ENCODE measurements at regions of chr11 and their contacts with region 1.

Region 1: DNA sequence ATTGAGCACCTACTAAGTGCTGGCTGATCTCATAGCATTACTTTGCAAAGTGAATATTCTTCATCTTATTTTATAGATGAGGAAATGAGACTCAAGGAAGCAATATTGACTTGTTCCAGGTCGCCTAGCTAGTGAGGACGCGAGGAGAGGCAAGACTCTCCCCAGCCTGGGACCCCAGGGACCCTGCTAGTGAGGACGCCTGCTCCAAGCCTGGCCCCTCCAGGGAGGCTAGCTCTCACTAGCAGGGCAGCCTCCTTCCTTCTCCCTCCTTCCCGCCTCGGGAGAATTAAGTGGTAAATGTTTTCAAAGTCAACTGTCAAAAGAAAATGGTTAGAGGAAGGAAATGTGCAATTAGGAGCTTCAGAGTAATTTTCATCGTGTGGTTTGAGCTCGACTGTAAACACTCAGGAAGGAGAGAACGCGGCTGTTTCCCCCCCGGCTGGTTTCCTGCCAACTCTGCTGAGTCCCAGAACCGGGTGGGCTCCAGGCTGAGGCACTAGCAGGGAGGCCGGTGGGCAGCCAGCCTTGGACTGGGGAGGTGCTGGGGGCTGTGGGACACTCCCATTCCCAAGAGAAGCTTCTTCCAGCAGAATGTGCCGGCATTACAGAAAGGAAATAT is 17.9 kb downstream of the MYEOV start:
- DNase-seq: peak in 6 of 10 donors; percentile 20 to 59 (median 52)
- ATAC-seq: peak; percentile 87 to 90
- H3K4me3 Mint-ChIP-seq: peak overlapping the region; percentile 47 to 79 (median 71)
- H3K27ac Mint-ChIP-seq: peak overlapping the region in 9 of 10 donors; percentile 40 to 90 (median 86)
- H3K4me1 Mint-ChIP-seq: peaks cover 28 to 40% (median 34%) of the 10 kb centered on the region in 4 donors
- H3K27me3 Mint-ChIP-seq: peaks cover 0 to 4% (median 0%) of the 10 kb centered on the region in 5 donors

Region 2: DNA sequence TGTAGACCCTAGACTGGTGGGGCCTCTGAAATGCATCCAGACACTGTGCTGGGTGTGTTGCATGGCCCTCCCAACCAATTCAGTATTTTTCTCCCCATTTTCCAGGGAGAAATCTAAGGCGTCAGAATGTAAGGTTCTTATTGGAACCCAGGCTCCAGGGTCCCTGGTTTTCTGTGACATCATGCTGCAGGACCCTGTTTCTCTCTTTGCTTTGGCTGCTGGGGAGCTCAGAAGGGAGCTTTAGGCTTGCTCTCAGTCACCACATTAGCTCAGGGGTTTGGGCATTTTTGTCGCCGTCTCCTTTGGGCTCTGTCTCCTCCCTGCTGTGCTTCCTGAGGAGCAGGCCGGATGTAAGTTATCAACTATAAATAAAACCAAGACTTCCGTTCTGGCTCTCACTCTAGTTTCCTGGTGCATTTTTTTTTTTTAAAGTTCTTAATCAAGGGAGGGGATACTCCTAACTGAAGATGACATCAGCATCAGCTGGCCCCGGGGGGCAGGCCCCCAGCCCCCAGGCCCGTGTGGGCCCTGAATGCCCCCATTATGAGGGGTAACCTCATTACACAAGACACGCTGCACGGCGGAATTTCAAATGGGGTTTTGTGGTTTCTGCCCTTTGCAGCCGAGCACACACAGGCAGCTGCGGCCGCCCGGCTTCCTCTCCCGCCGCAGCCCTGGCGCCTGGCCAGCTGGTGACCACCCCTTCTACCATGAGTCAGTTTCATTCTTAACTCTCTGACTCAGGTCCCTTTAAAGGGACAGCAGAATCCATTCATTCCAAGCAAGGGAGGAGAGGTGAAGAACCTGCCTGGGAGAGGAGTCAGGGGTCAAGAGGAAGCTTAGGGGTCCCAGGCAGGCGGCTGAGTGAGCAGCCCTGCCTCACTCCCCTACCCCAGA is 14.7 kb before region 1 on chr11:
- POLR2A ChIA-PET with region 1: interaction called, 43 read pairs
- DNase-seq: peak; percentile 38 to 87 (median 68)
- ATAC-seq: peak; percentile 51 to 73
- H3K4me3 Mint-ChIP-seq: peak overlapping the region; percentile 59 to 89 (median 80)
- H3K27ac Mint-ChIP-seq: peak overlapping the region; percentile 60 to 97 (median 92)
- H3K4me1 Mint-ChIP-seq: peaks cover 31 to 72% (median 50%) of the 10 kb centered on the region in 4 donors
- H3K27me3 Mint-ChIP-seq: no peaks in the 10 kb centered on the region

Region 3: DNA sequence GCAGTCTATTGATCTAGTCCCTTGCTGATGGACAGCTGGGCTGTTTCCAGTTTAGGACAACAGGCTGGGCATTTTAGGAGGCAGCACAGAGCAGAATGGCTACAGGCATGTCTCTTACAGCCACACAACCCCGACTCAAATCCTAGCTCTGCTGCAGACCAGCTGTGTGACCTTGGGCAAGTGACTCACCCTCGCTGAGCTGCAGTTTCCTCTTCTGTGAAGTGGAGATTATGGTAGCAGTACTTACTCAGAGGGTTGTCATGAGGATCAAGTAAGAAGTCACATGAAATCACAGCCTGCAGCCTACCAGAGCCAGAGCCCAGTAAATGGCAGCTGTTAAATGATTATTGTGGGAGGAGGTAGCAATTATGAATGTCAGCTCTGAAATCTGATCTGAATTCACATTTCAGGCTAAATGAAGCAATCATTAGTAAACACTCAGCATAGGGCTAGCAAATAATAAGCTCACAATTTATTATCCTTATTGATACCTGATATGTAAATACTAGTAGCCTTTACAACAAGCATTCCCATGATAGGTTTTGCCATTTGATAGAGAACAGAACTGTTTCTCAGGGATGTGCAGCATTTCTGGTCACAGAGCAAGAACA is 40.9 kb after region 1 on chr11:
- POLR2A ChIA-PET with region 1: no interaction called
- DNase-seq: no peak
- ATAC-seq: no peak
- H3K4me3 Mint-ChIP-seq: no peak overlapping the region
- H3K27ac Mint-ChIP-seq: no peak overlapping the region
- H3K4me1 Mint-ChIP-seq: no peaks in the 10 kb centered on the region
- H3K27me3 Mint-ChIP-seq: peaks cover 0 to 10% (median 7%) of the 10 kb centered on the region in 5 donors

Measured in naive thymus-derived CD8-positive, alpha-beta T cell (primary cell).